HepG2 (cell line): ENCODE measurements at regions of chr1 and their contacts with region 1.

Region 1: GRCh38 chr1:239731082-239731748 is 344.8 kb downstream of the CHRM3 start:
- DNase-seq: no peak
- ATAC-seq: no peak
- H3K4me3 ChIP-seq: no peak overlapping the region
- H3K27ac ChIP-seq: no peak overlapping the region
- H3K4me1 ChIP-seq: no peaks in the 10 kb centered on the region
- H3K27me3 ChIP-seq: no peaks in the 10 kb centered on the region
- CTCF ChIP-seq: no peak
- EP300 ChIP-seq: no peak
- POLR2A ChIP-seq: no peak
- RAD21 ChIP-seq: no peak

Region 2: DNA sequence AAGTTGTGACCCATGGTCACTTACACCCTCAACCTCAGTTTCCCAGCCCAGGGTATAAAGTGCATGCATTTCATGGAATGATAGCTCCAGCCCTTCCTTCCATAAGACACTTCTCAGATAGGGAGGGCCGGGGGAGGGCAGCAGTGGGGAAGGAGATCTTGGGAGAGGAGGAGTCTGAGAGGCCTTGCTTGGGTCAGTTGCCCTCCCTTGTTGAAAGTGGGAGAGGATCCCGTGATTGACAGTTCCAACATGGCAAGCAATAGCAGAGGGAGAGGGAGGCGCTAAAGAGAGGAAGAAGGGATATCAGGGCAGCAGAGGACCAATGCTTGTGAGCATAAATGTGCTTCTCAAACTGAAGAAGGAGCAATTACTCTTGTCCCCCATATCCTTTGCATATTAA is 100.4 kb before region 1 on chr1:
- CTCF ChIA-PET with region 1: no interaction called
- POLR2A ChIA-PET with region 1: no interaction called
- in situ Hi-C with region 1: no loop called
- intact Hi-C with region 1: no loop called
- DNase-seq: no peak
- ATAC-seq: no peak
- H3K4me3 ChIP-seq: no peak overlapping the region
- H3K27ac ChIP-seq: no peak overlapping the region
- H3K4me1 ChIP-seq: no peaks in the 10 kb centered on the region
- H3K27me3 ChIP-seq: no peaks in the 10 kb centered on the region
- CTCF ChIP-seq: no peak
- EP300 ChIP-seq: no peak
- POLR2A ChIP-seq: no peak
- RAD21 ChIP-seq: no peak

Region 3: DNA sequence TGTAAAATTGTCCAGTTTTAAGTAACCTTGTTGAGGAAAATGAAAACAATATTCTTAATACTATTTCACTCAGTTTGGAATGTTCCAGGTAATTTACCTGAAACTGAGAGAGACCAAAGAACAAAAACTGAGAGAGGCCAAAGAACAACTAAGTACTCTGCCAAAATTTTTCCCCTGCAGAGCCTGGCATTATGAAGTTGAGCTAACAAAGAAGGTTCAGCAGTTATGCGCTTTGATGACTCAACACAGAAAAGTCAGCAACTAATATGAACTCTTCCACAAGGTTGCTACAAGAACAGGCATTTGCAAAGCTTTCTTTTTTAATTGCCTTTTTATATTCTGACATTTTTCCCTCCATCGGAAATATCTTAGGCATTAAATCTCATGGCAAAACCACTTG is 73.9 kb before region 1 on chr1:
- CTCF ChIA-PET with region 1: no interaction called
- POLR2A ChIA-PET with region 1: no interaction called
- in situ Hi-C with region 1: no loop called
- intact Hi-C with region 1: loop called (anchors 2 kb)
- DNase-seq: no peak
- ATAC-seq: no peak
- H3K4me3 ChIP-seq: no peak overlapping the region
- H3K27ac ChIP-seq: no peak overlapping the region
- H3K4me1 ChIP-seq: no peaks in the 10 kb centered on the region
- H3K27me3 ChIP-seq: no peaks in the 10 kb centered on the region
- CTCF ChIP-seq: no peak
- EP300 ChIP-seq: no peak
- POLR2A ChIP-seq: no peak
- RAD21 ChIP-seq: no peak